Activated naive CD4-positive, alpha-beta T cell treated with anti-CD3 and anti-CD28 coated beads for 36 hours (primary cell): ENCODE measurements at regions of chr6 and their contacts with region 1.

Region 1: GRCh38 chr6:30556066-30556905 is at the start of gene GNL1:
- DNase-seq: peak; percentile 100
- H3K4me3 Mint-ChIP-seq: peak within 1 kb of the TSS; percentile 99
- H3K27ac Mint-ChIP-seq: peak within 1 kb of the TSS; percentile 100
- H3K4me1 Mint-ChIP-seq: peaks cover 38% of the 10 kb centered on the region
- H3K27me3 Mint-ChIP-seq: no peaks in the 10 kb centered on the region
- total RNA-seq, gene GNL1: 78.2 to 82.1 TPM

Region 2: DNA sequence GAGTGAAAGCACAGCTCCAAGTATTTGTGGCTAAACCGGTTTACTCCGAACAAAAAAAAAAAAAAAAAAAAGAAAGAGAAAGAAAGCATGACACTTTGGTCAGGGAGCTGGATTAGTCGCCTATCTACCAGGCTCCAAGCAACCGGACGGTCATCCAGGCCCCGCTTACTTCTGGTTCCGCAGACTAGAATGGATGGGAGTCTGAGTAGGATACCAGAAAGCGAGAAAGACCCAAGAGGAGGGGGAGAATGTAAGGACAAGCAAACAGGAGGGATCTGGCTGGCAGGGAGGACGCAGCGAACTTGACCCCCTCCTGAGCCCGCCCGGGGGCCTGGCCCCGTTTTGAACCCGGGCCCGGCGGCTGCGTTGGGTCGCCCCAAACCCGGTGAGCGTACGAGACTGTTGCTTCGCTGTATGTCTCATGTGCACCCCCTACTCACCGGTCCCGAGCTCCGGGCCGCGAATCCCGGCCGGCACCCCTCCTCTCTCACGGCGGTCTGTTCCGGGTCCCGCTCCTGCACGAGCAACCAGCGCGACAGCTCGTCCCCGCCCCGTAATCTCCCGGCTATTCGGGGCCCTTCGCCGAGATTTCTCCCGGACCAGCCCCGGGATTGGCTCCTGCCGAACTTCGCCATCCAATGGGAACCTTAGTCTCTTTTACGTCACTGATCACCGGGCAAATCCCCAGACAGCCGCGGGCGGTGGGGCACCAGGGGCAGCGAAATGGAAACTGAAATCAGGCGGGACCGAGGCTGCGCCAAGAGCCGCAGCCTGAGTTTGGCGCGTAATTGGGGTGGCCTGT is 343.2 kb before region 1 on chr6 and contains the start of gene TRIM26:
- CTCF ChIA-PET with region 1: no interaction called
- intact Hi-C with region 1: loop called (anchors 1 kb)
- DNase-seq: peak; percentile 99
- H3K4me3 Mint-ChIP-seq: peak within 1 kb of the TSS; percentile 94
- H3K27ac Mint-ChIP-seq: peak within 1 kb of the TSS; percentile 99
- H3K4me1 Mint-ChIP-seq: peaks cover 41% of the 10 kb centered on the region
- H3K27me3 Mint-ChIP-seq: no peaks in the 10 kb centered on the region
- total RNA-seq, gene TRIM26: 36.8 to 38.7 TPM

Region 3: DNA sequence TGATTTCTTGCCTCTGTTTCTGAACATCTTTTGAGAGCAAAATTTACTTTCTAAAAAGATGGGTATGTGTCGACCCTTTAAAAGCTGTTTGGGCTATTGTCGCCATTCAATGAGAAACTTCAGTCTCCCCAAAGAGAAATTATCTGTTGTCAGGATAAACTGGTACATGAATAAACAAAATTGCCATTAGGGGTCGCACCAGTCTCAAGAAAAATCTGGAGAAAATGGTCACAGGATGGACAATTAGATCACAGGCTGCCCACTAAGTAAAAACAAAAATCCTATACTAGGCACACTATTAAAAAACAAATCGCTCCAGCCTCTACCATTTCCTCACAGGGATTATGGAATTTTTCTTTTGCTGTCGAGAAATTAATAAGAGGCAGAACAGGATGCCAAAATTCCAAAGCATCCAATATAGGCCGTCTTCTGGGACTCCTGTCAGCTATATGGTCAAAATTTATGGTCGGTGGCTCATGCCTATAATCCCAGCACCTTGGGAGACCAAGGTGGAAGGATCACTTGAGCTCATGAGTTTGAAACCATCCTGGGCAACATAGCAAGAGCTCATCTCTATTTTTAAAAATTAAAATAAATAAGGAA is 72.5 kb before region 1 on chr6:
- CTCF ChIA-PET with region 1: interaction called, 36 read pairs
- intact Hi-C with region 1: no loop called
- DNase-seq: peak; percentile 54
- H3K4me3 Mint-ChIP-seq: no peak overlapping the region
- H3K27ac Mint-ChIP-seq: no peak overlapping the region
- H3K4me1 Mint-ChIP-seq: peaks cover 44% of the 10 kb centered on the region
- H3K27me3 Mint-ChIP-seq: peaks cover 35% of the 10 kb centered on the region

Region 4: GRCh38 chr6:30541515-30542403 is 14.5 kb before region 1 on chr6:
- CTCF ChIA-PET with region 1: interaction called, 70 read pairs
- intact Hi-C with region 1: no loop called
- DNase-seq: peak; percentile 89
- H3K4me3 Mint-ChIP-seq: peak overlapping the region; percentile 71
- H3K27ac Mint-ChIP-seq: peak overlapping the region; percentile 20
- H3K4me1 Mint-ChIP-seq: peaks cover 41% of the 10 kb centered on the region
- H3K27me3 Mint-ChIP-seq: no peaks in the 10 kb centered on the region

Region 5: GRCh38 chr6:30717042-30717844 is 161.0 kb after region 1 on chr6 and contains the start of gene MDC1:
- CTCF ChIA-PET with region 1: no interaction called
- intact Hi-C with region 1: loop called (anchors 1 kb)
- DNase-seq: peak; percentile 100
- H3K4me3 Mint-ChIP-seq: peak within 1 kb of the TSS; percentile 98
- H3K27ac Mint-ChIP-seq: peak within 1 kb of the TSS; percentile 99
- H3K4me1 Mint-ChIP-seq: peaks cover 45% of the 10 kb centered on the region
- H3K27me3 Mint-ChIP-seq: no peaks in the 10 kb centered on the region
- total RNA-seq, gene MDC1: 84.1 to 84.8 TPM

Region 6: GRCh38 chr6:30914076-30914853 is 358.0 kb after region 1 on chr6 and contains the start of gene VARS2:
- CTCF ChIA-PET with region 1: no interaction called
- intact Hi-C with region 1: loop called (anchors 5 kb)
- DNase-seq: peak; percentile 90
- H3K4me3 Mint-ChIP-seq: peak within 1 kb of the TSS; percentile 87
- H3K27ac Mint-ChIP-seq: peak within 1 kb of the TSS; percentile 86
- H3K4me1 Mint-ChIP-seq: peaks cover 28% of the 10 kb centered on the region
- H3K27me3 Mint-ChIP-seq: no peaks in the 10 kb centered on the region
- total RNA-seq, gene VARS2: 78.1 to 82.8 TPM